CD4-positive, alpha-beta memory T cell (primary cell): ENCODE measurements at regions of chr11 and their contacts with region 1.

Region 1: GRCh38 chr11:809287-810039 is at the start of gene RPLP2:
- DNase-seq: peak; percentile 97 to 99 (median 97)
- H3K4me3 ChIP-seq: peak within 1 kb of the TSS; percentile 53 to 100
- H3K4me3 Mint-ChIP-seq: peak within 1 kb of the TSS; percentile 91 to 98 (median 94)
- H3K27ac ChIP-seq: peak within 1 kb of the TSS; percentile 96
- H3K27ac Mint-ChIP-seq: peak within 1 kb of the TSS; percentile 98 to 100 (median 99)
- H3K4me1 ChIP-seq: peaks cover 35% of the 10 kb centered on the region
- H3K4me1 Mint-ChIP-seq: peaks cover 8 to 48% (median 29%) of the 10 kb centered on the region in 4 donors
- H3K27me3 ChIP-seq: no peaks in the 10 kb centered on the region
- H3K27me3 Mint-ChIP-seq: no peaks in the 10 kb centered on the region
- total RNA-seq, gene RPLP2: 4,870 to 5,155 TPM

Region 2: DNA sequence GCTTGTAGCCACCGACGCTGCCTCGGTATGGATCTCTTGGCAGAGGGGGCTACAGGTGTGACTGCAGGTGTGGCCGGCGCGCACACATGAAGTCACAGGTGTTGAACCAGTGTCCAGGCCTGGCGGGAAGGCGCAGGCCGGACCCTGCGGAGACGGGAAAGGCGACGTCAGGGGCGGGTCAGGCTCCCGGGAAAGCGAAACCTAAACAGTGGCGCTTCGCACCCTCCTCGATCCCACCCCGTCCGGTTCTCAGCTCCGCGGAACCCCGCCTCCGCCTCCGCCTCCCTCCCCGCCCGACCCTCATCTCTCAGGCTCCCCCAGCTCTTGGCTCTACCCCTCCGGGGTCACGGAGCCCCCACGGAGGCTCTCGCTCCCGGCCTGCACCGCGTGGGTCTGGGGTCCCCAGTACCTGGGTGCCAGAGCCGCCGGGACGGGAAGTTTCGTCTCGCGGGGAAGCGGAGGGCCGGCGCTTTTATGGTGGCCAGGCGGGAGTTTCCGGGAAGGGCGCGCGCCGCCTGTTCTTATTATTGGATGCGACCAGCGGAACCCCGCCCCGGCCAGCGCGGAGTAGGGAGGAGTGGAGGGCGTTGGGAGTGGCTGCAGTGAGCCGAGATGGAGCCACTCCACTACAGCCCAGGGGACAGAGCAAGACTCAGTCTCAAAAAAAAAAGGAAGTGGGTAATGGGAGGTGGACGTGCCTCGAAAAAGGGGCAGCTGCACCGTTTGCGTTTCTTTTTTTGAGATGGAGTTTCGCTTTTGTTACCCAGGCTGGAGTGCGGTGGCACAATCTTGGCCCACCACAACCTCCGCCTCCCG is 193.8 kb before region 1 on chr11 and contains the start of gene IRF7:
- CTCF ChIA-PET with region 1: no interaction called
- POLR2A ChIA-PET with region 1: interaction called, 4 read pairs
- intact Hi-C with region 1: loop called (anchors 5 kb)
- DNase-seq: peak; percentile 79 to 89 (median 83)
- H3K4me3 ChIP-seq: peak within 1 kb of the TSS; percentile 78 to 80
- H3K4me3 Mint-ChIP-seq: peak within 1 kb of the TSS; percentile 90 to 96 (median 93)
- H3K27ac ChIP-seq: peak within 1 kb of the TSS; percentile 96
- H3K27ac Mint-ChIP-seq: peak within 1 kb of the TSS; percentile 89 to 96 (median 93)
- H3K4me1 ChIP-seq: peaks cover 29% of the 10 kb centered on the region
- H3K4me1 Mint-ChIP-seq: peaks cover 6 to 35% (median 20%) of the 10 kb centered on the region in 4 donors
- H3K27me3 ChIP-seq: no peaks in the 10 kb centered on the region
- H3K27me3 Mint-ChIP-seq: no peaks in the 10 kb centered on the region
- total RNA-seq, gene IRF7: 67.6 to 76.6 TPM

Region 3: GRCh38 chr11:777288-778255 is 31.9 kb before region 1 on chr11 and contains the start of gene GATD1:
- CTCF ChIA-PET with region 1: interaction called, 3 read pairs
- POLR2A ChIA-PET with region 1: interaction called, 6 read pairs
- intact Hi-C with region 1: loop called (anchors 1 kb)
- DNase-seq: peak; percentile 89 to 95 (median 92)
- H3K4me3 ChIP-seq: peak within 1 kb of the TSS; percentile 29 to 76
- H3K4me3 Mint-ChIP-seq: peak within 1 kb of the TSS; percentile 77 to 89 (median 87)
- H3K27ac ChIP-seq: peak within 1 kb of the TSS; percentile 67
- H3K27ac Mint-ChIP-seq: peak within 1 kb of the TSS; percentile 68 to 93 (median 87)
- H3K4me1 ChIP-seq: peaks cover 32% of the 10 kb centered on the region
- H3K4me1 Mint-ChIP-seq: peaks cover 3 to 36% (median 9%) of the 10 kb centered on the region in 4 donors
- H3K27me3 ChIP-seq: no peaks in the 10 kb centered on the region
- H3K27me3 Mint-ChIP-seq: no peaks in the 10 kb centered on the region
- total RNA-seq, gene GATD1: 51.5 to 64.9 TPM

Region 4: DNA sequence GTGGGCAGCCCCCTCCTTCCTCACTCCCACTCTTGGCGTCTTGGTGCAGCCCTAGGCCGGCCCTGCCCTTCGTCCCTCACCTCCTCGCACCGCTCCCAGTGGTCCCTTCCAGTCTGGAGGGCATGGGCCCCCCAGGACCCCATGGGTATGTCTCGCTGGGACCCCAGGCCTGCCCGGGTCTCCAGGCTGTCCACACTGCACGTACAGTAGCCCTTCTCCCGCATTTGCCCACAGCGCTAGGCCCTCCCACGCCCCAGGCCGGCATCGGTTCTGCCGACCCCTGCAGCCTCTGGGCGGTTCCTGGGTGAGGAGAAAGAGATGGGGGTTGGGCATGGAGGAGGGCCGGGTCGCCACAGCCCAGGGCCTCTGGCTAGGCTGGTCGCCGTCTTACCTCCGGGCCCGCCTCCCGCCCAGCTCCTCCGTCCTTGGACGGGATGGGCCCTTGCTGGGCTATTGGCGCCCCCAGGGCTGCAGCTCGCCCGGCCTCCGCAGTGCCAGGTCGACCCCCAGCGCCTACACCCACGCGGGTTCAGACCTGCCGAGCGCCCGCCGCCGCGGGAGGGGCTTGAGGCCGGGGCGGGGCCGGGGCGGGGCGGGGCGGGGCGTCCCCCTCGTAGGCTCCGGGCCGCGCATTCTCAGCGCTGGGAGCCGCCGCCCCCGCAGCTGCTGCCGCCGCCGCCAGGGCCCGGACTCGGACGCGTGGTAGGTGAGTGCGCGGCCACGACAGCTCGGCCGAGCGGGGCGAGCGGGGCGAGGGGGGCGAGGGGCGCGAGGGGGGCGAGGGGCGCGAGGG is 23.1 kb after region 1 on chr11 and contains the start of gene CD151:
- CTCF ChIA-PET with region 1: no interaction called
- POLR2A ChIA-PET with region 1: interaction called, 12 read pairs
- intact Hi-C with region 1: no loop called
- DNase-seq: peak in 1 of 5 donors; percentile 45
- H3K4me3 ChIP-seq: peak within 1 kb of the TSS in 1 of 2 donors; percentile 43
- H3K4me3 Mint-ChIP-seq: peak within 1 kb of the TSS; percentile 51 to 82 (median 68)
- H3K27ac ChIP-seq: peak within 1 kb of the TSS; percentile 15
- H3K27ac Mint-ChIP-seq: peak within 1 kb of the TSS in 3 of 7 donors; percentile 19 to 63 (median 36)
- H3K4me1 ChIP-seq: peaks cover 52% of the 10 kb centered on the region
- H3K4me1 Mint-ChIP-seq: peaks cover 2 to 43% (median 19%) of the 10 kb centered on the region in 4 donors
- H3K27me3 ChIP-seq: peaks cover 3% of the 10 kb centered on the region
- H3K27me3 Mint-ChIP-seq: peaks cover 7 to 13% of the 10 kb centered on the region in 2 donors
- total RNA-seq, gene CD151: 20.7 to 23.4 TPM

Region 5: DNA sequence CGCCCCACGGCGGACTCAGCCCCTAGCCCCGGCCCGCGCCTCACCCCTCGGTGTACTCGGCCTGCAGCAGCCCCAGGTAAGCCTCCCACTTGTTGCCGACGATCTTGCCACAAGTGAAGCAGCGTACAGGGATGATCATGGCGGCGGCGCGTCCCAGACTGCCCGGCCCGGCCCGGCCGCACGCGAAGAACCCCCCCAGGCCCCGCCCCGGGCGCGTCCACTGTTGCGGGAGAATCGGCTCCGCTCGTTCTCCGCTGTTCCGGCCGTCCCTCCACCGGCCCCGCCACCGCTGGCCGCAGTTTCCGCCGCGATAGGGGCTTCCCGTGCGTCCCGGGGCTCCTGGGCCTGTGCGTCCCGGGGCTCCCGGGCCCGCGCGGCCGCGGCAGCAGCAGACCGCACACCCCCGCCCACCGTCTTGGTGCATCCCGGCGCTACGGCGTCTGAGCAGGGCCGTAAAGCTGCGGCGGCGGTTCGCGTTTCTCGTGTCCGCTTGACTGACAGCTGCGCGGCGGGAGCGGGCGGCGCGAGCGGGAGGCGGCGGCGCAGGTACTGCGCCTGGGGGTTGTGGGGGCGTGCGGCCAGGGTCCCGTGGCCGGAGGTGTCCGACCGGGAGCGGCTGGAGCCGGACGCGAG is 33.0 kb after region 1 on chr11 and contains the starts of genes POLR2L and TSPAN4:
- CTCF ChIA-PET with region 1: no interaction called
- POLR2A ChIA-PET with region 1: interaction called, 17 read pairs
- intact Hi-C with region 1: loop called (anchors 1 kb)
- DNase-seq: peak; percentile 83 to 94 (median 85)
- H3K4me3 ChIP-seq: peak within 1 kb of the TSS; percentile 57 to 97
- H3K4me3 Mint-ChIP-seq: peak within 1 kb of the TSS; percentile 84 to 89 (median 86)
- H3K27ac ChIP-seq: peak within 1 kb of the TSS; percentile 77
- H3K27ac Mint-ChIP-seq: peak within 1 kb of the TSS; percentile 66 to 89 (median 84)
- H3K4me1 ChIP-seq: peaks cover 31% of the 10 kb centered on the region
- H3K4me1 Mint-ChIP-seq: peaks cover 4 to 35% (median 15%) of the 10 kb centered on the region in 4 donors
- H3K27me3 ChIP-seq: no peaks in the 10 kb centered on the region
- H3K27me3 Mint-ChIP-seq: peaks cover 0 to 2% of the 10 kb centered on the region in 2 donors
- total RNA-seq, gene POLR2L: 55.8 to 56.2 TPM
- total RNA-seq, gene TSPAN4: 5.3 to 5.8 TPM

Region 6: GRCh38 chr11:876519-876918 is 67.1 kb after region 1 on chr11:
- CTCF ChIA-PET with region 1: no interaction called
- POLR2A ChIA-PET with region 1: no interaction called
- intact Hi-C with region 1: no loop called
- DNase-seq: no peak
- H3K4me3 ChIP-seq: no peak overlapping the region
- H3K4me3 Mint-ChIP-seq: no peak overlapping the region
- H3K27ac ChIP-seq: no peak overlapping the region
- H3K27ac Mint-ChIP-seq: no peak overlapping the region
- H3K4me1 ChIP-seq: no peaks in the 10 kb centered on the region
- H3K4me1 Mint-ChIP-seq: peaks cover 0 to 2% (median 0%) of the 10 kb centered on the region in 4 donors
- H3K27me3 ChIP-seq: no peaks in the 10 kb centered on the region
- H3K27me3 Mint-ChIP-seq: no peaks in the 10 kb centered on the region